H1 (cell line): ENCODE measurements at regions of chr1 and their contacts with region 1.

Region 1: GRCh38 chr1:63327417-63328139 is 5.2 kb downstream of the FOXD3 start:
- DNase-seq: peak; percentile 62 to 97
- H3K4me3 ChIP-seq: peak overlapping the region in 3 of 4 experiments; percentile 2 to 80 (median 25); a peak in 4 of 8 replicates
- H3K27ac ChIP-seq: no peak overlapping the region
- H3K4me1 ChIP-seq: peaks cover 6 to 41% (median 18%) of the 10 kb centered on the region in 4 experiments
- H3K27me3 ChIP-seq: peaks cover 0 to 77% (median 46%) of the 10 kb centered on the region in 4 experiments; a peak in 5 of 7 replicates
- CTCF ChIP-seq: peak; percentile 83 to 99 (median 98)
- EP300 ChIP-seq: no peak
- POLR2A ChIP-seq: no peak
- RAD21 ChIP-seq: peak; percentile 78

Region 2: DNA sequence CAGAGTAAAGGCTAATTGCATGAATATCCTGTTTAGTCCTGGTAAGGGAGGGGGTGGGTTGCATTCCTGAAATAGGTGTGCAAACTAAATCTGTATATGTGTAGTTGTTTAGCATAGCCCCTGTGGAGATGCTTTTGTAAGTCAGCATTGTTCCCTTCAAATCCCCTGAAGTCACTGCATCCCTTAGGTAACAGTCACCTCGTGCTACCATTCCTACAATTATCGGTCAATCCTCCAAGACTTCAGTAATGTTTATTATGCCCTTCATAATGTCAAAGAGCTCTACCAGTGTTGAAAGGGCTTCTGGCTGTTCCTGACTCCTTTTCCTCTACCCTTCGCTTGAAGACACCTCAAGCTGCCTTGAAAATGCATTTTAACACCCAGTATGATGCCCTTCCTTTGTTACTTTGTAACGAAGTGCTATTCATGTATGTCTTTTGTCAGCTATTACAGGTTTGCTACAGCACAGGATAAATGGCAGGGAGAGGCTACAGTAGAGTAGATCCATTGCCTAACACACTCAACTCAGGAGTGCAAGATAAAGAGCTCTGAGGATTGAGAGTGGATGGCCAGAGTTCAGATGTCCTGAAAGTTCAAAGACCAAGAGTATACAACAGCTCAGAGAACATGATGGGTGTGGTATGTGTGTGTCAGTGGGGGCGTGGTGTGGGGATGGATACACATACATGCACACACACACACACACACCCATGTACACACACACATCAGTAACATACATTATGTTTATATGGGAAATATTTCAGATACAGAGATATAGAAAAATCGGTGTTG is 32.6 kb before region 1 on chr1:
- CTCF ChIA-PET with region 1: interaction called, 8 read pairs
- POLR2A ChIA-PET with region 1: interaction called, 13 read pairs
- DNase-seq: peak; percentile 48 to 66
- H3K4me3 ChIP-seq: peak overlapping the region in 1 of 4 experiments; percentile 14; a peak in 2 of 8 replicates
- H3K27ac ChIP-seq: peak overlapping the region; percentile 61
- H3K4me1 ChIP-seq: peaks cover 0 to 13% (median 10%) of the 10 kb centered on the region in 4 experiments; a peak in 6 of 7 replicates
- H3K27me3 ChIP-seq: no peaks in the 10 kb centered on the region
- CTCF ChIP-seq: no peak
- EP300 ChIP-seq: peak in 1 of 2 experiments; percentile 35; a peak in 1 of 3 replicates
- POLR2A ChIP-seq: peak in 1 of 2 experiments; percentile 51; a peak in 2 of 3 replicates
- RAD21 ChIP-seq: no peak

Region 3: GRCh38 chr1:63343922-63344321 is 16.3 kb after region 1 on chr1:
- CTCF ChIA-PET with region 1: interaction called, 18 read pairs
- POLR2A ChIA-PET with region 1: interaction called, 11 read pairs
- DNase-seq: no peak
- H3K4me3 ChIP-seq: no peak overlapping the region
- H3K27ac ChIP-seq: no peak overlapping the region
- H3K4me1 ChIP-seq: peaks cover 0 to 7% (median 2%) of the 10 kb centered on the region in 4 experiments; a peak in 2 of 7 replicates
- H3K27me3 ChIP-seq: no peaks in the 10 kb centered on the region; a peak in 1 of 7 replicates
- CTCF ChIP-seq: no peak
- EP300 ChIP-seq: no peak
- POLR2A ChIP-seq: no peak
- RAD21 ChIP-seq: no peak

Region 4: DNA sequence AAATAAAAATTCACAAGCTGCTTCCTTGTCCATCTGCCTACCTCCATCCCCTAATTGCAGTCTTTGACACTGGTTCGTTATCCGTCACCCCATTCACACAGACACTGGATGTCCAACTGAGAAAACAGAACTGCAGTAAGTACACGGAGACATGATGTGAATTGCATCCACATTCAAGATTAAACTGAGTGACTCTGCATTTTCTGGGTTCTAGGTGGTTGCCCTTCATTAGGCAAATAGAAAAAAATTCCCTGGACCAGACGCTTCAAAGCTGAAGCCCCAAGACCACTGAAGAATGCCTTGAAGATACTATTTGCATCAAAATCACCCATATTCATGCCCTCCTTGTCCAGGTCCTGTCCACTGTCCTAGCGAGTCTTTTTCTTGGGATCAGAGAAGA is 32.0 kb after region 1 on chr1:
- CTCF ChIA-PET with region 1: interaction called, 23 read pairs
- POLR2A ChIA-PET with region 1: interaction called, 6 read pairs
- DNase-seq: no peak
- H3K4me3 ChIP-seq: no peak overlapping the region
- H3K27ac ChIP-seq: no peak overlapping the region
- H3K4me1 ChIP-seq: peaks cover 0 to 2% (median 0%) of the 10 kb centered on the region in 4 experiments; a peak in 1 of 7 replicates
- H3K27me3 ChIP-seq: no peaks in the 10 kb centered on the region
- CTCF ChIP-seq: no peak
- EP300 ChIP-seq: no peak
- POLR2A ChIP-seq: no peak
- RAD21 ChIP-seq: no peak

Region 5: GRCh38 chr1:63442141-63442475 is 114.5 kb after region 1 on chr1:
- CTCF ChIA-PET with region 1: interaction called, 15 read pairs
- POLR2A ChIA-PET with region 1: interaction called, 6 read pairs
- DNase-seq: no peak
- H3K4me3 ChIP-seq: no peak overlapping the region
- H3K27ac ChIP-seq: no peak overlapping the region
- H3K4me1 ChIP-seq: no peaks in the 10 kb centered on the region
- H3K27me3 ChIP-seq: no peaks in the 10 kb centered on the region
- CTCF ChIP-seq: no peak
- EP300 ChIP-seq: no peak
- POLR2A ChIP-seq: no peak
- RAD21 ChIP-seq: no peak